AG04450 (cell line): ENCODE measurements at regions of chr17 and their contacts with region 1.

Region 1: DNA sequence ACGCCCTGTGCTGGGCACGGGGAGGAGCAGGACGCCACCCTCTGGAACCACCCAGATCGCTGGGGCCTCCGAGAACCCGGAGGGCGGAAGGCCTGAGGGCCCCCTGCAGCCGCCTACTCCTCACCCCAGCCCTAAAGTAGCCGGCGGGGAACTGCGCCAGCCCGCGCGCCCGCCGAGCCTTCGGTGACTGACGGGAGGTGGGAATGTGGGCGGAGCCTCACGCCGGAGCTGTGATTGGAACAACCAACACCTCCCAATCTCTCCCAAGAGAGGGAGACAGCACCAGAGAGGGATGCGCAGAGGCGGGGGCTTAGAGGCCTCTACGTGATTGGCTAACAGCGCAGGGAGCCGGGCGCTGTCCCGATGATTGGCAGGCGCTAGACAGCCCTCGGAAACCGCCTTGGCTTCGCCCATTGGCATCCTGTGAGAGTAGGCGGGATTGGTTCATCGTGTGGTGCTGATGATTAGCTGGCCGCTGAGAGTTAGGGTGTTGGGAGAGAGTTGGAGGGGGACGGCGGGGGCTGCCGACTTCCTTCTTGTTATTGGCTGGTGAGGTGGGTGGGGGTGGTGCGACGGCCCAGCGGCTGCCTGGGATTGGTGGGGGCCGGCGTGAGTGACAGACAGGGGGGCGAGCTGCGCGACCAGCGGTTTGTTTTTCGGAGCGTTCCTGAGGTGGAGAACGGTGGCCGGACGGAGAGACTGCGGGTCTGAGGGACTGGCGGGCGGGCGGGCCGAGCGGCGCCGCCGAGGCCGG is at the start of gene MAP3K3:
- DNase-seq: peak; percentile 100
- H3K4me3 ChIP-seq: peak within 1 kb of the TSS; percentile 75
- H3K27ac ChIP-seq: peak within 1 kb of the TSS; percentile 65
- H3K27me3 ChIP-seq: no peaks in the 10 kb centered on the region
- CTCF ChIP-seq: peak; percentile 17; the same call in 1 of the 2 replicates
- polyA plus RNA-seq, gene MAP3K3: 14.9 and 15.3 TPM in 2 replicates

Region 2: DNA sequence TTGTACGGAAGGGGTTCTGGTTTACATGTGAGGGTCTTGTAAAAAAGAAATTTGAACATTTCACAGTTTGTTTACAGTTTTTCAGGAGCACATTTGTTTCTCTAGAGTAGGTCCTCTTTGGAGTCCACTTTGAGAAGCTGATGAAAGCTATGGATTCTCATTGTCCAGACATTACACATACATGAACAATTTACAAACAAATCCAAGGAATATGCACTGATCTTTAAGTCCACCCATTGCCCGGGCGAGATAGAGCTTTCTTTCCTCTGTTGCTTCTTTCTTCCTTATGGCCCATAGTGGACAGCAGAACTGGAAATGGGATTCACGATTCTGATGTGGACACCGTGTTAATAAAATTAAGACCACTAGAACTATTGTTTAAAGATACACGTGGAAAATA is 69.7 kb before region 1 on chr17:
- CTCF ChIA-PET with region 1: no interaction called
- POLR2A ChIA-PET with region 1: interaction called, 11 read pairs
- DNase-seq: peak; percentile 13
- H3K4me3 ChIP-seq: peak overlapping the region; percentile 96
- H3K27ac ChIP-seq: no peak overlapping the region
- H3K27me3 ChIP-seq: no peaks in the 10 kb centered on the region
- CTCF ChIP-seq: no peak

Region 3: GRCh38 chr17:63751806-63752205 is 129.9 kb after region 1 on chr17:
- CTCF ChIA-PET with region 1: no interaction called
- POLR2A ChIA-PET with region 1: no interaction called
- DNase-seq: no peak
- H3K4me3 ChIP-seq: no peak overlapping the region
- H3K27ac ChIP-seq: no peak overlapping the region
- H3K27me3 ChIP-seq: no peaks in the 10 kb centered on the region
- CTCF ChIP-seq: no peak